ENCODE measurements at regions of chr4 and their contacts with region 1.

Region 1: GRCh38 chr4:5863461-5864113 is 29.3 kb downstream of the CRMP1 start:
- DNase-seq: peak; percentile 40
- H3K4me3 Mint-ChIP-seq: peak overlapping the region; percentile 19
- H3K27ac Mint-ChIP-seq: no peak overlapping the region
- H3K4me1 Mint-ChIP-seq: peaks cover 36% of the 10 kb centered on the region
- H3K27me3 Mint-ChIP-seq: no peaks in the 10 kb centered on the region

Region 2: DNA sequence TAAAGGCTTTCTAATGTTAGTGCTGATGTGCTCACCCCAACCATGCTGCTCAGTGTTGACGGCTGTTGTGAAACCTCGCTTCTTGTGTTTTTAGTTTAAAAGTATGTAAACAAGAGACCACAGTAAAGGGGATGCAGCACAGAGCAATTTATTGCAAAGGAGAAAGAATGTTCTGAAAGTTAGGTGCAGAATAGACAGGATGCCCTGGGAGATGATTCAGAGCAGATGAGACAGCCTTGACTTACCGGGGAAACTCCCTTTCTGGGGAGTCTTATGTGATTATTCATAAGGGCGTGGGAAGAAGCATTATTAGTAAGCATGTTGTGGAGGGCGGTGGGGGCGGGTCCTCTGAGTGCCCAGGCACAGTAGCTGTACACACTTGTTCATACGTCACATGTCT is 104.8 kb before region 1 on chr4:
- intact Hi-C with region 1: loop called (anchors 5 kb)
- DNase-seq: peak; percentile 17
- H3K4me3 Mint-ChIP-seq: no peak overlapping the region
- H3K27ac Mint-ChIP-seq: peak overlapping the region; percentile 58
- H3K4me1 Mint-ChIP-seq: peaks cover 10% of the 10 kb centered on the region
- H3K27me3 Mint-ChIP-seq: no peaks in the 10 kb centered on the region

Region 3: GRCh38 chr4:5824635-5825034 is 39.0 kb before region 1 on chr4:
- intact Hi-C with region 1: loop called (anchors 2 kb)
- DNase-seq: no peak
- H3K4me3 Mint-ChIP-seq: no peak overlapping the region
- H3K27ac Mint-ChIP-seq: no peak overlapping the region
- H3K4me1 Mint-ChIP-seq: peaks cover 34% of the 10 kb centered on the region
- H3K27me3 Mint-ChIP-seq: peaks cover 8% of the 10 kb centered on the region